Dendritic cell treated with granulocyte-macrophage colony-stimulating factor and Interleukin-4, amounts not matched to agents 40 ng/mL and 50 ng/mL, for 4 days (primary cell): ENCODE measurements at regions of chr1 and their contacts with region 1.

Region 1: DNA sequence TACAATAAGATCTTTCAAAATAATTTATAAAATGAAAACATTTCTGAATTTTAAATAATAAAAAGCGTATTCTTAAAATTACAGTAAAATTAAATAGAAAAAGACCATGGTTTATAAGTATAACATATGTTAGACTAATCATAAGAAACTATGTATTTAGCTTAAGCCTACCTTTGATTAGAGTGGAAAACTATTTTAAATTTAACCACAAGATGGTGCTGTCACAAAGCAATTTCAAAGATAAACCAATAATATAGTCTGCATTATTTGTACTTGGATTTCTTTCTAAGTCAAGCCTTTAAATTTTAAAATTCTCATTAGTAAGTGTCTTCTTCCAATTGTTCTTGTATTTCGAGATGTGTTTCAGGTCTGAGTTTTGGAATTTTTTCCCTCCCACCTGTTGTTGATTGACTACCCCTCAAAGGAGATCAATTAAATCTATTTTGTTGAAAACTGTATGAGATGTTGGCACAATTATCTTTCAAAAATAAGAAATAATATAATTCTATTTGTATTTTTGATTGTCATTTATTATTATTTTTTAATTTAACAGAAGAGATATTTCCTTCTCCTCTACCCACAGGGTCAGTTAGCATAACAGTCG is 459.8 kb downstream of the KCNT2 start:
- H3K4me3 Mint-ChIP-seq: no peak overlapping the region
- H3K27ac Mint-ChIP-seq: no peak overlapping the region
- H3K4me1 Mint-ChIP-seq: no peaks in the 10 kb centered on the region
- H3K27me3 Mint-ChIP-seq: no peaks in the 10 kb centered on the region

Region 2: GRCh38 chr1:196317535-196318522 is 169.4 kb after region 1 on chr1:
- intact Hi-C with region 1: loop called (anchors 10 kb)
- H3K4me3 Mint-ChIP-seq: no peak overlapping the region
- H3K27ac Mint-ChIP-seq: no peak overlapping the region
- H3K4me1 Mint-ChIP-seq: no peaks in the 10 kb centered on the region
- H3K27me3 Mint-ChIP-seq: no peaks in the 10 kb centered on the region

Region 3: GRCh38 chr1:196372896-196373536 is 224.5 kb after region 1 on chr1:
- intact Hi-C with region 1: loop called (anchors 5 kb)
- H3K4me3 Mint-ChIP-seq: no peak overlapping the region
- H3K27ac Mint-ChIP-seq: no peak overlapping the region
- H3K4me1 Mint-ChIP-seq: peaks cover 16% of the 10 kb centered on the region
- H3K27me3 Mint-ChIP-seq: no peaks in the 10 kb centered on the region

Region 4: GRCh38 chr1:196660852-196661251 is 512.4 kb after region 1 on chr1:
- intact Hi-C with region 1: loop called (anchors 1 kb)
- H3K4me3 Mint-ChIP-seq: peak overlapping the region; percentile 32
- H3K27ac Mint-ChIP-seq: no peak overlapping the region
- H3K4me1 Mint-ChIP-seq: no peaks in the 10 kb centered on the region
- H3K27me3 Mint-ChIP-seq: no peaks in the 10 kb centered on the region